Activated T-helper 1 cell treated with anti-CD3 and anti-CD28 coated beads, Interleukin-12 subunit alpha, Interleukin-12 subunit beta, Interleukin-2, Interleukin-4 antibody, amounts not matched to agents 30 ng/mL and 10 ng/mL and 1 ng/mL, durations not matched to agents 14 hours and 24 hours and 36 hours (primary cell): ENCODE measurements at regions of chr3 and their contacts with region 1.

Region 1: GRCh38 chr3:125374996-125375941 is at the start of gene ZNF148:
- DNase-seq: peak; percentile 91
- H3K4me3 Mint-ChIP-seq: peak within 1 kb of the TSS; percentile 99
- H3K27ac Mint-ChIP-seq: peak within 1 kb of the TSS; percentile 95
- H3K4me1 Mint-ChIP-seq: peaks cover 33% of the 10 kb centered on the region
- H3K27me3 Mint-ChIP-seq: no peaks in the 10 kb centered on the region
- total RNA-seq, gene ZNF148: 34.7 and 38.5 TPM in 2 replicates

Region 2: DNA sequence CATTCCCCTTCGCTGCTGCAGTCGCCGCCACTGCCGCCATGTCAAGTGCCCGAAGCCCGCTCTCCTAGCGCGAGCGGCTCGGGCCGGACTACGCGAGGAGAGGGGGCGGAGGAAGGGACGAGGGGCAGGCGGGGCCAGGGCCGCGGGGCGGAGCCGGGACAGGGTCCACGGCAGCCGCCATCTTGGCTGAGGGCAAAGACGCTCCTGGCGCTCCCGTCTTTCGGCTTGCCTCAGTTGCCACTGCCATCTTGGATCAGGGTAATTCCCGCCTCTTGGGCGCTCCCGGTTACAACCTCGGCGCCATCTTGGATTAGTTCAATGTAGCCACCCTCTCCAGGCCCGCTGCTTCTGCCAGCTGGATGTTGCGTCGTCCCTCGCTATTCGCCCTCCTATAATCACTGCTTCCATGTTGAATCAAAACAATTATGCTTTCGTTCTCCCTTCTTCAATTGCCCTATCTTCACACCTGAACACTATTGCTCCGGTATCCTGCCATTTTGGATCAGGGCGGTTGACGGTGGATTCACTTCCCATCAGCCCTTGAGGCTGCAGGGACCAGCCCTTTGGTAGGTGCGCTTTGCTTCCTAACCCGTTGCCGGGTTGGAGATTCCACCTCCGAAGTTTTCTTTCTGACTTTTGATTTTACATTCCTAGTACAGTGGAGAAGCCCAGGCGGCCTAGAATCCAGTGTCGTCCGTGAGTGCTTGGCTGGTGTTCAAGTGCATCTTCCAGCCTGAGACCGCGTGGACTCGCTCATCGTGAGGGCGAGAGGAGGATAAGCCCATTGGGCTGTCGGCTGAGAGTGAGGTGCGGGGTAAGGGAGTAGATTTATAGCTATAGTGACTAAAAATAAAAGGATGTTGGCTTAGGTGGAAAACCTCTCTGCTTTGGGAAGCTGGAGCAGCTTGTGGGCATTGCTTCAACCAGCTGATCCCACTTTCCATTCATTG is 1790.0 kb before region 1 on chr3 and contains the start of gene HACD2:
- intact Hi-C with region 1: loop called (anchors 2 kb)
- DNase-seq: peak; percentile 93
- H3K4me3 Mint-ChIP-seq: no peak within 1 kb of the TSS
- H3K27ac Mint-ChIP-seq: peak within 1 kb of the TSS; percentile 63
- H3K4me1 Mint-ChIP-seq: peaks cover 23% of the 10 kb centered on the region
- H3K27me3 Mint-ChIP-seq: no peaks in the 10 kb centered on the region
- total RNA-seq, gene HACD2: 31.5 TPM in 2 replicates

Region 3: DNA sequence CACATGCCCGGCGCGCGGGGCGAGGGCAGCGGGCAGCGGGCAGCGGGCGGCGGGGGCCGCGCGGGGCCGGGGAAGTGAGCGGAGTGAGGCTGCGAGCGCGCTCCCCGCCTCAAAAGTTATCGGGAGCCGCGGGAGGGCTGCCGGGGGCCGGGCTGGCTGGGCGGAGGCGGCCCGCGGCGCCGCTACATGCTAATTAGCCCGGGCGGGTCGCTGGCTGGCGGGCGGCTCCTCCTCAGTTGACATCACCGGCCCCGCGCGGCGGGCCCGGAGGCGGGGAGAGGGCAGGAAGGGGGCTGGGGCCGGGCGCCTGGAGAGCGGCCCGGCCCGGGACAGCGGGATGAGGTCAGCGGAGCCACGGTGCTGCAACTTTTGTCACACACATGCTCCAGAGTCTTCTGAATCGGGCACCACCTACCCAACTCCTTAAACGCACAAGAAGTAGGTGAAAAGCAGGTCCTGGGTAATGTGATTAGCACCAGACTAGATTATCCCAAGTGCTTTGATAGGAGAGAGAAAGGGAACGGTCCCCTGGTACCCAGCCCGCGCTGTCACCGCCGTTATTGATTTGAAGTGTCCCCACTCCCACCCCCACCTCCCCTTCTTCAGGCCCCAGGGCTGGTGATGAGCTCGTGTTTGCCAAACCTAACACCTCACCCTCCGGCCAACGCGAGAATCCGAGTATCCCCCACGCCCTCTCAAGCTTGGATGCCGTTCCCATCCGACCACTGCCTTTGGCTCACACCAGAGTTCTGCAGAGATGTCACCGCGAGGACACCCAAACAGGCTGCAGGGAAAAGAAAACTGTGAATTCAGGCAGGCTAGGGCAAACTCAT is 319.1 kb before region 1 on chr3 and contains the start of gene HEG1:
- intact Hi-C with region 1: loop called (anchors 1 kb)
- DNase-seq: peak; percentile 77
- H3K4me3 Mint-ChIP-seq: peak within 1 kb of the TSS; percentile 97
- H3K27ac Mint-ChIP-seq: peak within 1 kb of the TSS; percentile 87
- H3K4me1 Mint-ChIP-seq: peaks cover 38% of the 10 kb centered on the region
- H3K27me3 Mint-ChIP-seq: peaks cover 18% of the 10 kb centered on the region
- total RNA-seq, gene HEG1: 43.7 and 45.1 TPM in 2 replicates

Region 4: GRCh38 chr3:125214738-125215137 is 160.5 kb before region 1 on chr3:
- intact Hi-C with region 1: loop called (anchors 5 kb)
- DNase-seq: no peak
- H3K4me3 Mint-ChIP-seq: no peak overlapping the region
- H3K27ac Mint-ChIP-seq: peak overlapping the region; percentile 1
- H3K4me1 Mint-ChIP-seq: peaks cover 19% of the 10 kb centered on the region
- H3K27me3 Mint-ChIP-seq: peaks cover 46% of the 10 kb centered on the region

Region 5: DNA sequence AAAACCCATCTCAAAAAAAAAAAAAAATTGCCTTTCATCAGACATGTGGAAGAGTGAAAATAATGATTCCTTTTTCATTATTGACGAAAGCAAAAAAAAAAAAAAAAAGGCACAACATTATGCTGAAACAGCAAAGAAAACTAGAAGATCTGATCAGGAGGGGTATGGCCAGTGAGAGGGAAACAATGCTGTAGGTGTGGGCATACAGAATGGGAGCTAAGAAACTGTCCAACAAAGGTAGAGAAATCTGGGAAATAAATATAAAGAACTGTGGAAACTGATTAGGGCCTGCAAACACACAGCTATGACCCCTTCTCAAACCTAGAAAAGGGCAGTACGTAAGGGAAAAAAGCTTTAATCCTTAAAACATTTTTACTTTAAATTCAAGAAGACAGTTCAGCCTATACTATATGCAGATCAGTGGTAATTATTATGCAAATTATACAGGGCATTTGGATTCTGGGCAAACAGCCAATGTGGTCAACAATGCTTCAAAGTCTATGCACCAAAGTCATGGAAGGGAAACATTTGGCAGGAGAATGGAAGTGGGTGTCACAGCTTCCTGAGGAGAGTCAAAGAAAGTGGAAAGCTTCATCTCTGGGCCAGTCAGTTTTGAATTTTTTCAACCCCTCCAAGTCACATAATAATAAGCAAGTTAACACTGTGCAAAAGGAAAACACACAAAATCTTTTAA is 94.5 kb before region 1 on chr3:
- intact Hi-C with region 1: no loop called
- DNase-seq: no peak
- H3K4me3 Mint-ChIP-seq: no peak overlapping the region
- H3K27ac Mint-ChIP-seq: no peak overlapping the region
- H3K4me1 Mint-ChIP-seq: peaks cover 10% of the 10 kb centered on the region
- H3K27me3 Mint-ChIP-seq: no peaks in the 10 kb centered on the region

Region 6: GRCh38 chr3:125310623-125311081 is 64.6 kb before region 1 on chr3:
- intact Hi-C with region 1: loop called (anchors 2 kb)
- DNase-seq: peak; percentile 47
- H3K4me3 Mint-ChIP-seq: peak overlapping the region; percentile 79
- H3K27ac Mint-ChIP-seq: peak overlapping the region; percentile 79
- H3K4me1 Mint-ChIP-seq: peaks cover 38% of the 10 kb centered on the region
- H3K27me3 Mint-ChIP-seq: no peaks in the 10 kb centered on the region

Region 7: GRCh38 chr3:125437631-125438435 is 62.6 kb after region 1 on chr3:
- intact Hi-C with region 1: loop called (anchors 2 kb)
- DNase-seq: peak; percentile 37
- H3K4me3 Mint-ChIP-seq: no peak overlapping the region
- H3K27ac Mint-ChIP-seq: no peak overlapping the region
- H3K4me1 Mint-ChIP-seq: no peaks in the 10 kb centered on the region
- H3K27me3 Mint-ChIP-seq: peaks cover 2% of the 10 kb centered on the region

Region 8: GRCh38 chr3:125462722-125463299 is 87.5 kb after region 1 on chr3:
- intact Hi-C with region 1: no loop called
- DNase-seq: no peak
- H3K4me3 Mint-ChIP-seq: no peak overlapping the region
- H3K27ac Mint-ChIP-seq: no peak overlapping the region
- H3K4me1 Mint-ChIP-seq: no peaks in the 10 kb centered on the region
- H3K27me3 Mint-ChIP-seq: no peaks in the 10 kb centered on the region

Region 9: GRCh38 chr3:125594581-125595011 is 219.3 kb after region 1 on chr3:
- intact Hi-C with region 1: loop called (anchors 1 kb)
- DNase-seq: peak; percentile 1
- H3K4me3 Mint-ChIP-seq: peak overlapping the region; percentile 95
- H3K27ac Mint-ChIP-seq: peak overlapping the region; percentile 88
- H3K4me1 Mint-ChIP-seq: peaks cover 28% of the 10 kb centered on the region
- H3K27me3 Mint-ChIP-seq: no peaks in the 10 kb centered on the region